PC-9 (cell line): ENCODE measurements at regions of chr13 and their contacts with region 1.

Region 1: GRCh38 chr13:47019977-47020376 is 123.1 kb upstream of the HTR2A start:
- DNase-seq: no peak
- H3K4me3 ChIP-seq: no peak overlapping the region
- H3K27ac ChIP-seq: no peak overlapping the region
- H3K4me1 ChIP-seq: no peaks in the 10 kb centered on the region
- H3K27me3 ChIP-seq: no peaks in the 10 kb centered on the region
- CTCF ChIP-seq: no peak

Region 2: DNA sequence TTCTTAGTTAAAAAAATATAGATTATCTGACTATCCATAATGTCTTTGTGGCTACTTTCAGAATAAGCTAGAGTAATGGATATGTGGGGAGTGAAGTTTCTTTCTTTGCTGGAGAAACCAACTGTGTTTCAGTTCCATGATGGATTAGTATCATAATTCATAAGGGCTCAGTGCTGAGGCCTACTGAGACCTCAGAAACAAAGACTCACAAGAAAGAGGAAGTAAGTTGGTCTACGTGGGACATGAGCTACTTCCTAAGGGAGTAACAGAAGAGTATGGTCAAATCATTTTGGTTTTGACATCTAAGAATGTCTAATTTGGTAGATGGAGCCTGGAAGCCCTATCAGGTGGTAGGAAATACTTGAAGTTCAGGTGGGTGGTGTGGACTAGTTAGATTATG is 24.1 kb before region 1 on chr13:
- CTCF ChIA-PET with region 1: no interaction called
- POLR2A ChIA-PET with region 1: no interaction called
- intact Hi-C with region 1: no loop called
- DNase-seq: no peak
- H3K4me3 ChIP-seq: no peak overlapping the region
- H3K27ac ChIP-seq: no peak overlapping the region
- H3K4me1 ChIP-seq: no peaks in the 10 kb centered on the region
- H3K27me3 ChIP-seq: no peaks in the 10 kb centered on the region
- CTCF ChIP-seq: no peak

Region 3: GRCh38 chr13:47459512-47459911 is 439.5 kb after region 1 on chr13:
- CTCF ChIA-PET with region 1: no interaction called
- POLR2A ChIA-PET with region 1: interaction called, 10 read pairs
- intact Hi-C with region 1: no loop called
- DNase-seq: no peak
- H3K4me3 ChIP-seq: no peak overlapping the region
- H3K27ac ChIP-seq: no peak overlapping the region
- H3K4me1 ChIP-seq: no peaks in the 10 kb centered on the region
- H3K27me3 ChIP-seq: no peaks in the 10 kb centered on the region
- CTCF ChIP-seq: no peak